ENCODE measurements at regions of chr22 and their contacts with region 1.

Region 1: DNA sequence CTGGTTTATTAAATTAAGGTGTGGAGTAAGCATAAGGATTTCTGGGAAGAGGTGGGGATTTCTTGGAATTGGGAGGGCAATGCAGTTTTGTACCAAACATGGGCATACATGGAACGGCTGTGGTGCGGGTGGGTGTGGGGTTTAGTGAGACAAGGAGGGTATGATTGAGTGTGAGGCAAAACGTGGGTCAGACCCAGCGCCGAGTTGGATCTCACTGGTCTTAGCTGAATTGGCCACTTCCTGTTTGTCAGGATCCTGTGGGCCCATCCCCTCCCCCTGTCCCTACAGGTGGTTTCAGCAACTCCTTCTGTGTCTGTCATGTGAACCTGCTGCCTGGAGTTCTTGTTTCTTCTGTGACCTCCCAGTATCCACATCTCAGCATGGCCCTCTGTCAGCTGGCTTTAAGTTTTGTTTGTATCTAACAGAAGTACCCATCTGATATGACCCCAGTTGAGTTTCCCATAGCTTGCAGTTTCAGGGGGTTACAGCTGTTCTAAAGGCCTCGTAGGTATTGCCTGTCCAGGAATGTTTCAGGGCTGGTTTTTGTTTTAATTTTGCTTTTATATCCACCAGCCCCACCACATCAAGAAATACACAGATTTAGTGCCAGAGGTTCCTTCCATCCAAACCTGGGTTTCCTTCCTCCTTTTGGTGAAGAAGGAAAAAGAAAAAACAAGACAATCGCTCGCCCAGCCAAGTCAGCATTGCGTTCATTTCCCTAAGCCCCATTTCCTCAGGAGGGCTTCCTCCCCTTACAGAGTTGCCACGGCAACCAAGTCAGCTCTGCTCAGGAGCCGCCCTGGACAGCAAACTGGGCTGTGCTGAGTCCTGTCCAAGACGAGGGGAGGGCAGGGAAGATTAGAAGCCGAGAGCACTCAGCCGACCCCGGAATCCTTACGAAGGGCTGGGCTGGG is 6.0 kb downstream of the APOL1 start:
- DNase-seq: no peak
- H3K4me3 ChIP-seq: no peak overlapping the region
- H3K27ac ChIP-seq: no peak overlapping the region
- H3K4me1 ChIP-seq: peaks cover 0 to 13% (median 12%) of the 10 kb centered on the region in 4 donors
- H3K27me3 ChIP-seq: no peaks in the 10 kb centered on the region
- CTCF ChIP-seq: no peak

Region 2: GRCh38 chr22:36191106-36191836 is 67.7 kb before region 1 on chr22:
- intact Hi-C with region 1: no loop called
- DNase-seq: peak; percentile 47 to 77
- H3K4me3 ChIP-seq: no peak overlapping the region
- H3K27ac ChIP-seq: peak overlapping the region in 1 of 2 donors; percentile 1
- H3K4me1 ChIP-seq: peaks cover 0 to 8% (median 3%) of the 10 kb centered on the region in 4 donors
- H3K27me3 ChIP-seq: no peaks in the 10 kb centered on the region
- CTCF ChIP-seq: no peak

Region 3: GRCh38 chr22:36201630-36202319 is 57.2 kb before region 1 on chr22 and contains the start of gene APOL4:
- intact Hi-C with region 1: loop called (anchors 5 kb)
- DNase-seq: peak; percentile 66 to 78
- H3K4me3 ChIP-seq: peak within 1 kb of the TSS in 1 of 2 donors; percentile 8
- H3K27ac ChIP-seq: no peak within 1 kb of the TSS
- H3K4me1 ChIP-seq: peaks cover 0 to 2% (median 0%) of the 10 kb centered on the region in 4 donors
- H3K27me3 ChIP-seq: peaks cover 0 to 4% of the 10 kb centered on the region in 2 donors
- CTCF ChIP-seq: no peak